ENCODE measurements at regions of chr12 and their contacts with region 1.

Region 1: DNA sequence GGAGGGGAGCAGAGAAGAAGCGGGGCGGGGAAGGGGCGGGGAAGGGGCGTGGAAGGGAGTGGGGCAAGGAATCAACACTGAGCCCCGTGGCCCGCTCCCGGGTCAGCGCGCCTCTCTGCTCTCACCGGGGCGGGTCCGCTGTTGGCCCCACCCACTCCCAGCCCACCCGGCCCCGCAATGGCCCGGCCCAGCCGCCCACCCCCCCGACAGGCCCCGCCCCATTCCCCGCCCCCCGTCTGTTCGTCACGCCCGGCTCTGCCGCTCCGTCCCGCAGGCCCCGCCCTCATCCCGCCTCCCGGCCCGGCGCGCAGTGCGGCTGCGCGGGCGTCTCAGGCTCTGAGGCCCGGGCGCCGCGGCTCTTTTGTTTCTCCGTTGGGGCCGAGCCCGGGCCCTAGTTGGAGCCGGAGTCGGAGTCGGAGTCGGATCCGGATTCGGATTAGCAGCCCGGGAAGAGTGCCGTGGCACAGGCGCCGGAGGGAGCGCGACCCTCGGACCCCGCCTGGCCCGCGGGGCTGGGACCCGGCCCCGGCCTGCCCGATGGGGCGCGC is at the start of gene ULK1:
- DNase-seq: peak; percentile 94 to 99 (median 98)
- ATAC-seq: peak; percentile 83 to 85
- H3K4me3 ChIP-seq: peak within 1 kb of the TSS; percentile 99
- H3K27ac ChIP-seq: peak within 1 kb of the TSS; percentile 95
- H3K4me1 ChIP-seq: peaks cover 3% of the 10 kb centered on the region
- H3K27me3 ChIP-seq: no peaks in the 10 kb centered on the region
- total RNA-seq, gene ULK1: 33.4 to 51.3 (median 48.0) TPM

Region 2: DNA sequence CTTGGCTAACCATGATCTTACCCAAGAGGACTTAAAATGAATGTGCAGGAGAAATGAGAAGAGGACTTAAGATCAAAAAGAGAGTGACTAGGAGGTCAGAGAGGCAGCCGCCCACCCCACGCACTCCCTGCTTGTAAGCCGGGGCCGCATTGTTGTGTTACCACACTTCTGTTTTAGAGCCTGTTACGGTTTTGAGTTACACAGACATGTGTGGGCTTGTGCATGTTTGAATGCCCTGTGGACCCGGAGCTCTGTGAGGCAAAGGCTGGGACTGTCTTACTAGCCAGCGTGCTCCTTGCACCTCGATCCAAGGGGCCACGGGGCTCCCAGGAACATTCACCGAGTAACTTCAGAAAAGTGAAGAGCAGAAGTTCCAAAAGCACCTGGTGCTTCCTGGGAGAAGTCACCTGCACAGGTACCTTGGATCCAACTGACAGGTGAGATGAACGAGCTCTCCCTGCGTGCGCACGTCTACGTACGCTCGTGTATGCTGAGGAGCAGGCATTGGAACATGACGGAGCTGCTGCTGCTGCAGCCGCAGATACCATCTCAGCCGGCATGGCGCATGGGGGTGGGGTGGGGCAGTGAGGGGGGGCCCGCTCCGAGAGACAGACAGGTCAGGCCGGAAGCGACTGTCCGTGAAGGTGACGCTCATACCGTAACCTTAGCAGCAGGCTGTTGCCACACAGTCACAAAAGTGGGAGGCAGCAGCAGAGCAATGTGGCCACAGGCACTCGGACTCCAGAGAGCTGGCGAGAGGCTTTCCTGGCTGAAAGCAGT is 159.9 kb before region 1 on chr12:
- intact Hi-C with region 1: no loop called
- DNase-seq: no peak
- ATAC-seq: no peak
- H3K4me3 ChIP-seq: no peak overlapping the region
- H3K27ac ChIP-seq: no peak overlapping the region
- H3K4me1 ChIP-seq: no peaks in the 10 kb centered on the region
- H3K27me3 ChIP-seq: no peaks in the 10 kb centered on the region

Region 3: GRCh38 chr12:131928711-131929580 is 34.6 kb after region 1 on chr12 and contains the start of gene PUS1:
- intact Hi-C with region 1: loop called in 1 of 4 experiments (anchors 5 kb)
- DNase-seq: peak; percentile 95 to 98 (median 97)
- ATAC-seq: peak; percentile 96
- H3K4me3 ChIP-seq: peak within 1 kb of the TSS; percentile 60
- H3K27ac ChIP-seq: peak within 1 kb of the TSS; percentile 46
- H3K4me1 ChIP-seq: no peaks in the 10 kb centered on the region
- H3K27me3 ChIP-seq: no peaks in the 10 kb centered on the region
- total RNA-seq, gene PUS1: 7.2 to 13.7 (median 7.9) TPM

Region 4: DNA sequence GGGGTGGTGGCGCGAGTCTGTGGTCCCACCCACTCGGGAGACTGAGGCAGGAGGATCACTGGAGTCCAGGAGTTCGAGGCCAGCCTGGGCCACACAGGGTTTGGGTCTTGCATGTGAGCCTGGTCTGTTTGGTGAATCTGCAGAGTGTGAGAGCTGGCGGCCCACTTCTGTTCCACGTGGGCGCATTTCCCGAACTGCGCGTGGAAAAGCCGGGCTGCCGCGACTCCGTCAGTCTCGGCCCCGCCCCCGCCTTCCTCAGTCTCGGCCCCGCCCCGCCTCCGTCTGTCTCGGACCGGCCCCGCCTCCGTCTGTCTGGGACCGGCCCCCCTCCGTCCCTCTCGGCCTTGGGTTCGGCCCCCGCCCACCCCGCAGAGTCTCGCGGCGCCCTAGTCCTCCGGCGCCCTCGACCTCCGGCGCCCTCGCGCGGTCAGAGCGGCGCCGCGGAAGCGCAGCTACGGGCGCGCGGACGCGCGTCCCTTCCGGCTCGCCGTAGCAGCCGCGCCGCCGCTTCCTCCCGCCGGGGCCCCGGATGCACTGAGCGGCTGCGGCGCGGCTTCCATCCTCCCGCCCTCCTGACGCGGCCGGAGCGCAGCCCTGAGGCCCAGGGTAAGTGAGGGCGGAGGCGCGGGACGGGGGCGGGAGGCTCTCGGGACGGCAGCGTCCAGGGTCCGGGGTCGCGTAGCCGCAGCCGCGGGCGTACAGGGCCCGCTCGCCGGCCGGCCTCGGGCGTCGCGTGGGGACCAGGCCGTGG is 55.2 kb after region 1 on chr12 and contains the start of gene EP400:
- intact Hi-C with region 1: loop called in 1 of 4 experiments (anchors 5 kb)
- DNase-seq: peak; percentile 97 to 99 (median 99)
- ATAC-seq: peak; percentile 98 to 99
- H3K4me3 ChIP-seq: peak within 1 kb of the TSS; percentile 95
- H3K27ac ChIP-seq: peak within 1 kb of the TSS; percentile 72
- H3K4me1 ChIP-seq: peaks cover 4% of the 10 kb centered on the region
- H3K27me3 ChIP-seq: no peaks in the 10 kb centered on the region
- total RNA-seq, gene EP400: 15.5 to 21.6 (median 18.1) TPM

Measured in right cardiac atrium (tissue), 5 donors.